ENCODE measurements at regions of chr22 and their contacts with region 1.

Region 1: GRCh38 chr22:23716811-23717801 is 26.3 kb downstream of the RGL4 start:
- DNase-seq: peak; percentile 66 to 91 (median 83)
- ATAC-seq: peak; percentile 96
- H3K4me3 ChIP-seq: peak overlapping the region; percentile 94 to 99
- H3K4me3 Mint-ChIP-seq: peak overlapping the region; percentile 82
- H3K27ac ChIP-seq: peak overlapping the region; percentile 75 to 90
- H3K27ac Mint-ChIP-seq: peak overlapping the region; percentile 88
- H3K4me1 ChIP-seq: peaks cover 15% of the 10 kb centered on the region
- H3K4me1 Mint-ChIP-seq: peaks cover 24% of the 10 kb centered on the region
- H3K27me3 ChIP-seq: no peaks in the 10 kb centered on the region
- H3K27me3 Mint-ChIP-seq: no peaks in the 10 kb centered on the region
- CTCF ChIP-seq: no peak

Region 2: DNA sequence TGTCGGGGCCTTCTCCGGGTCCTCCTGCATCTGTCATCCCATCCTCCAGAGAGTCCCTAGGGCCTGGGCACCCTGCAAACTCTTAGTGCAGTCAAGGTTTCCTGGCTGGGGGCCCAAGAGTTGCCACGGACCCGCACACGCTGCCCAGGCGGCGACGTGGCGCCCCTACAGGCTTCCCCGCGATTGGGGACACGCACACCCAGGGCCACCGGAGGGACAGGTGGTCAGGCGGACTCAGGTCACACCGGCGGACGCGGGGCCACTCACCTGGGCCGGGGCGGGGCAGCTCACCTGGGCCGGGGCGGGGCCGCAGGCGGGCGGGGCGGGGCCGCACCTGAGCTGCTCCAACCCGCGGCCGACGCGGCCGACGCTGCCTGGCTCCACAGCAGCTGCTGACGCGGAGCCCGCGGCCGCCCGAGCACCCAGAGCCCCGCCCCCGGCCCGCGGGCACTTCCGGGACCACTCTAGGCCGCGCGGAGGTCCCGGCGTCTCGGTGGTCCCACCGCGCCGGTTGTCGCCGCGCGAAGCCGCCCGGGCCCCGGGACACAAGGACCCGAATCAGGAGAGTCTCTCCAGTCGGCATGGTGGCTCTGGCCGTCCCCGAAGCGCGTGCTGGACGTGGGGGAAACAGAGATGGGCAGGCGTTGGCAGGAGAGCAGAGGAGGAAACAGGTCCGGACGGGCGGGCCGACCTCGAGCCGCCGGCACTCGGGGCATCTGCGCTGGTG is 33.8 kb after region 1 on chr22 and contains the start of gene ZNF70:
- CTCF ChIA-PET with region 1: interaction called, 4 read pairs
- POLR2A ChIA-PET with region 1: interaction called, 5 read pairs
- intact Hi-C with region 1: loop called in 1 of 2 experiments (anchors 1 kb)
- DNase-seq: peak; percentile 73 to 95 (median 88)
- ATAC-seq: peak; percentile 98
- H3K4me3 ChIP-seq: peak within 1 kb of the TSS; percentile 75 to 76
- H3K4me3 Mint-ChIP-seq: peak within 1 kb of the TSS; percentile 82
- H3K27ac ChIP-seq: peak within 1 kb of the TSS; percentile 62 to 71
- H3K27ac Mint-ChIP-seq: peak within 1 kb of the TSS; percentile 80
- H3K4me1 ChIP-seq: peaks cover 7% of the 10 kb centered on the region
- H3K4me1 Mint-ChIP-seq: peaks cover 17% of the 10 kb centered on the region
- H3K27me3 ChIP-seq: no peaks in the 10 kb centered on the region
- H3K27me3 Mint-ChIP-seq: no peaks in the 10 kb centered on the region
- CTCF ChIP-seq: peak; percentile 13
- total RNA-seq, gene ZNF70: 1.7 to 1.9 TPM

Region 3: DNA sequence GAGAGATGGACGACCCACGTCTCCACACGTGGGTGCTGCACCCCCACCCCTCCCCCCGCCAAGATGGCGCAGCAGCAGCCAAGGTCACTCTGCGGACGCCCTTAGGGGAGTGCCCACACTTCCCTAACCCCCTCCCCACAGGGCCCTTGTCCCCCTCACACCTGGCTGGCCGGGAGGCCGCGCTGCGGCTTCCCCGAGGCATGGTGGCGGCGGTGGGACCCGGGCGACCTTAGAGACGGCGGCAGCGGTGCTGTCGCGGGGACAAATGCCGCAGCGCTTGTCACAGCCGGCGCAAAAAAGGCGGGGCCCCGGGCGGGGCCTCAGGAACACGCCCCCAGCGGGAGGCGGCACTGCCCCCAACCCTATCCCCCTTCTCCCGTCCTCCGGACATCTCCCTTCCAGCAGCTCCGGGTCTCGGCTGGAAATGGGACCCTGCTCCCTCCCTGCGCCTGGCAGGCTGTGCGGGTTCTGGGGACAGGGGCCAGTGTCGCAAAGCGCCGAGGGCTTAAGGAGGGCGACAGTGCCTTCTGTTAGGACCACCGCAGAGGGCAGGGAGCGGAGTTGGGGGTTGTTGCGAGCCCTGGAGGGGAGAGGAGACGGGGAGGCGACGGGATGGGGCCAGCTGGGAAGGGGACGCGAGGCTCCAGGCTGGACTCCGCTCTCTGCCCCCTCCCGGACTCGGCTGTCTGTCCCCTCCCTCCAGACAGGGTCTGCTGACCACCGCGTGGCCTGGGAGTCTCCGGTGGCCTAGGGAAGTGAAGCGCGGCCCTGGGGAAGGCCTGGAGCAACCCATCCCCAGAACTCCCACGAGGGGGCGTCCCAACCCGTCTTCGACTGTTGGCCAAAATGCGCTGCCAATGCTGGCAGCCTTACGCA is 50.8 kb after region 1 on chr22 and contains the start of gene CHCHD10:
- CTCF ChIA-PET with region 1: interaction called, 3 read pairs
- POLR2A ChIA-PET with region 1: no interaction called
- intact Hi-C with region 1: loop called (anchors 2 to 5 kb)
- DNase-seq: peak; percentile 54 to 84 (median 77)
- ATAC-seq: peak; percentile 70
- H3K4me3 ChIP-seq: peak within 1 kb of the TSS; percentile 85 to 97
- H3K4me3 Mint-ChIP-seq: peak within 1 kb of the TSS; percentile 82
- H3K27ac ChIP-seq: peak within 1 kb of the TSS; percentile 58 to 72
- H3K27ac Mint-ChIP-seq: peak within 1 kb of the TSS; percentile 52
- H3K4me1 ChIP-seq: peaks cover 63% of the 10 kb centered on the region
- H3K4me1 Mint-ChIP-seq: peaks cover 42% of the 10 kb centered on the region
- H3K27me3 ChIP-seq: no peaks in the 10 kb centered on the region
- H3K27me3 Mint-ChIP-seq: no peaks in the 10 kb centered on the region
- CTCF ChIP-seq: peak; percentile 66
- total RNA-seq, gene CHCHD10: 40.7 to 52.4 TPM

Region 4: DNA sequence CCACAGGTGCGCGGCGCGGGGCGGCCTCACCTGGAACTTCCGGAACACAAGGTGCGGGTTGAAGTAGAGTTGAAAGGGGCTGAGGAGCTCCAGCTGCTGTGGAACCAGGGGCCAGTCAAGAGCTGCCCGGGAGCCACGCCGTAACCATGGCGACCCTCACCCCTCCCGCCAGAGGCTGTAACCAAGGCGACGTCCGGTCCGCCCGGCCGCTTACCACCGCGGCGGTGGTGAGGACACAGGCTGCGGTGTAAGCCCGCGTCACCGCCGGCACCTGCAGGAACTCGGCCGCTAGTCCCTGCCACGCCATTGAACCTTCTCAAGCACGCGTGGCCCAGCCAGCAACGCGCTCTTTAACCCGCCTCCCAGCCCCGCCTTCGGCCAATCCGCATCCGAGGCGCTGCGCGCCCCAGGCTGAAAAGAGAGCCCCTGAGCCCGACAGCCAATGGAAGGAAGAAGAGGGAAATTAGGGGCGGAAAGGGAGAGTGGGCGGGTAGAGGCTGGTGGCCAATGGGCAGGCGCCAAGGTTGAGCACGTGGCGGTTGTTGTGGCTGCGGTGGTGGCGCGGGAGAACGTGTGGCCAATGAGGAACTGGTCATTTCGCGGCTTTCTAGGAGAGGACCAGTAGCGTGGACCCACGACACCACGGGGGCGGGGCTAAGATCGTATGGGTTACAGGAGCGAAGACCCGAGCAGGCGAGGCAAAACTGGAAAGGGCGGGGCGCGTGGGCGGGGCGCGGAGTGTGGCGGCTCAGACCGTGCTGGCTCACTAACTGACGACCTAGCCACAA is 121.8 kb after region 1 on chr22 and contains the start of gene DERL3:
- CTCF ChIA-PET with region 1: no interaction called
- POLR2A ChIA-PET with region 1: no interaction called
- intact Hi-C with region 1: loop called in 1 of 2 experiments (anchors 1 kb)
- DNase-seq: peak; percentile 84 to 96 (median 92)
- ATAC-seq: peak; percentile 93
- H3K4me3 ChIP-seq: peak within 1 kb of the TSS; percentile 61 to 77
- H3K4me3 Mint-ChIP-seq: peak within 1 kb of the TSS; percentile 94
- H3K27ac ChIP-seq: peak within 1 kb of the TSS in 1 of 2 experiments; percentile 46
- H3K27ac Mint-ChIP-seq: peak within 1 kb of the TSS; percentile 82
- H3K4me1 ChIP-seq: peaks cover 7% of the 10 kb centered on the region
- H3K4me1 Mint-ChIP-seq: peaks cover 20% of the 10 kb centered on the region
- H3K27me3 ChIP-seq: no peaks in the 10 kb centered on the region
- H3K27me3 Mint-ChIP-seq: no peaks in the 10 kb centered on the region
- CTCF ChIP-seq: no peak
- total RNA-seq, gene DERL3: 0.81 to 0.92 TPM